ENCODE measurements at regions of chr4 and their contacts with region 1.

Region 1: DNA sequence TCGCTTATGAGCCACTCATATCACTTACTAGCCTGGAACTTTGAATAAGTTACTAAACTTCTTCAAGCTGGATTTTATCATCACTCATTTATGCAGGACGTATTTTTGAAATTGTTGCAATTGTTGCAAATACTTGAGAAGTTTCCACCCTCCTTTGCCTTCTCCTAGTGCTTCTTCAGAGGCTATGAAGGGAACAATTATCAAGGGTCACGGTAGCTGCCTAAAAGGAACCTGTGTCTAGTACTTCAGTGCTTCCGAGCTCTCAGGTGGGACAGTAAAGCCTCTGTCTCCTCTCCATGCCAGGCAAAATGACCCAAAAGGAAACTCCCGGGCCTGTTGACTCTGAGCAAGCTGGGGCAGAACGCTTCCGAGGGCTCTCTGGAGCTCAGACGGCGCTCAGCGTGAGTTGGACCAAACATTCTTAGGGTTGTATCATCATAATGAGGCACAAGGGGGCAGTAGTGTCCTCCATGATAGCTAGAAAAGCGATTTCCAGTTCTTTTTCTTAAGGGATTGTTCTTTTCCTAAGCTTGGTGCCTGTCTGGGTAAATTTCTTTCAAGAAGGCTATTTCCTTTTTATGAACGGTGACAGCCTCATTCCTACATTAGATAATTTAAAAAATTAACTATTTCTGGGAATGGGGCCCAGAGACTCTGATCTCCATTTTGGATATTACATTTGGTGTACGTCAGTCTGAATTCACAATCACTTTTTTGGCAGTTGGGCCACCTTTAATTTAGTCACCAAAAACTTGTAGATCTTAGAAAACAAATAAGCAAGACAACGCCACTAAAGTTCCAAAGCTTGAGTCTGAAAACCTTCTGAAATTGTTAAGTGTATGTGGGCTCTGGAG is 73.1 kb downstream of the PACRGL start:
- DNase-seq: peak; percentile 75
- H3K4me3 ChIP-seq: no peak overlapping the region
- H3K27ac ChIP-seq: no peak overlapping the region
- H3K4me1 ChIP-seq: peaks cover 2% of the 10 kb centered on the region
- H3K27me3 ChIP-seq: no peaks in the 10 kb centered on the region
- CTCF ChIP-seq: peak; percentile 76

Region 2: DNA sequence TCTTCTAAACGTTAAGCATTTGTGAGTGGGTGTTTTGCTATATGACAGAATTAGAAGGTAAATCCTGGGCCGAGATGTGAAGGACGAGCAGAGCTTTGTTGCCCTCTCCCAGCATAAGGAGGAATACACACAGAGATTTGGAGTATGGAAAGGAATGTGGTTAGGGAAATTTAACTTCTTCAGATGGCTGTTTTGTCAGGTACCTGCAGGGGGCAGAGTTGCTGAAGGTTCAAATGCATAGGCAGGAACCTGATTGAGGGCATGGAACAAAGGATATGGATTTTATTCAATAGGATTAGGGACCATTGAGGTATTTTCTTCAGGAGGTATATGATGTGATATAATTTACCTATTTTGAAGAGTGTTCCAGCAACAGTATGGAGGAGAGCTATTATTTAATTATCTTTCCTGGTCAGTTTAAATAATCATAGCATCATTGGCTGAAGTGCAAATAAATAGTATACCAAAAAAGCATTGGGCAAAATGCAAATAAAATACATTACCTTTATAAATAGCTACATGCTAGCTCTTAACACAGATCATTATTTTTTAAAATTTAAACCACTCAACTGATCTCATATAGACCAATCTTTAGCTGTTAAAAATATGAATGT is 378.1 kb before region 1 on chr4:
- CTCF ChIA-PET with region 1: no interaction called
- POLR2A ChIA-PET with region 1: no interaction called
- intact Hi-C with region 1: no loop called
- DNase-seq: peak; percentile 74
- H3K4me3 ChIP-seq: no peak overlapping the region
- H3K27ac ChIP-seq: no peak overlapping the region
- H3K4me1 ChIP-seq: peaks cover 18% of the 10 kb centered on the region
- H3K27me3 ChIP-seq: no peaks in the 10 kb centered on the region
- CTCF ChIP-seq: peak; percentile 87

Region 3: GRCh38 chr4:21134994-21135393 is 361.6 kb after region 1 on chr4:
- CTCF ChIA-PET with region 1: interaction called, 4 read pairs
- POLR2A ChIA-PET with region 1: no interaction called
- intact Hi-C with region 1: loop called (anchors 1 kb)
- DNase-seq: peak; percentile 37
- H3K4me3 ChIP-seq: no peak overlapping the region
- H3K27ac ChIP-seq: no peak overlapping the region
- H3K4me1 ChIP-seq: no peaks in the 10 kb centered on the region
- H3K27me3 ChIP-seq: no peaks in the 10 kb centered on the region
- CTCF ChIP-seq: peak; percentile 40; the same call in 1 of the 2 replicates

Region 4: DNA sequence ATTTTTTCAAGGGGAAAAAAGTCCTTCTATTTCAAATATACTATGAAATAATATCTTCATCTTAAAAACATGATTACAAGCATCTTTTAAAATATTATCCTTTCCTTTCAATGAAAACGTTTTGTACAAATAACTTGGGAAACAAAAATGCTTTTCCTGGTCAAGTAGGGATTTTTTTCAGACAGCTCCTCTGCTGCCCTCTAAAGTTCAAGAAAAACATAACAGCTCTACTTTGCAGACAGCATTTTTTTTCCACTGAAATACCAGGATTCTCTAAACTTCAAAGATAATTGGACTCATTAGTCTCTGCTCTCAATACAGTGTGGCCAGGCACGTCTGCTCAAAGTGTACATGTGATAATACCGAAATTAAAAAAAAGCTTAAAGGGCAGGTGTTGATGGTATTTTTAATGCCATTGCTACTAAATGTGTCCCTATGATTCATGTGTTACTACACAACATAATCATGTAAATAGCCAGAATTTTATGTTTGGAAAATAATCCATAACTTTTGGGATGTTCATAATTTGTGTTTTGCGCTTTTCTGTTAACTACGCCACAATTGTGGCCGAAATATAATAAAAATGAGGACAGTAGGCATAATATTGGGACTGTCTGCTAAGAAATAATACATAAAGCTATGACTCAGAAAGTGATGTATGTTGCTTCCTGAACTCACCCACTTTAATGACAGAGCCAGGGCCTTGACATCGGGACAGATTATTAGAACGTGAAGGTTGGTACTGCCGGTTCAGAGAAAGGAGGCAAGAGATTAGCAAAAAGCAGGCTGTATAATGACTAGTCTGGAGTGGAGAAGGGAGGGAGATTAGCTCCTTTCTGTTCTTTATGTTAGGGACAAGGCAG is 696.3 kb after region 1 on chr4:
- CTCF ChIA-PET with region 1: interaction called, 11 read pairs
- POLR2A ChIA-PET with region 1: no interaction called
- intact Hi-C with region 1: loop called (anchors 5 kb)
- DNase-seq: peak; percentile 23
- H3K4me3 ChIP-seq: no peak overlapping the region
- H3K27ac ChIP-seq: no peak overlapping the region
- H3K4me1 ChIP-seq: peaks cover 3% of the 10 kb centered on the region
- H3K27me3 ChIP-seq: no peaks in the 10 kb centered on the region
- CTCF ChIP-seq: peak; percentile 64

Region 5: GRCh38 chr4:21765810-21766407 is 992.5 kb after region 1 on chr4:
- CTCF ChIA-PET with region 1: no interaction called
- POLR2A ChIA-PET with region 1: no interaction called
- intact Hi-C with region 1: loop called (anchors 5 kb)
- DNase-seq: peak; percentile 52
- H3K4me3 ChIP-seq: no peak overlapping the region
- H3K27ac ChIP-seq: no peak overlapping the region
- H3K4me1 ChIP-seq: no peaks in the 10 kb centered on the region
- H3K27me3 ChIP-seq: no peaks in the 10 kb centered on the region
- CTCF ChIP-seq: peak; percentile 88